ENCODE measurements at regions of chr14 and their contacts with region 1.

Region 1: GRCh38 chr14:92531106-92531873 is 17.7 kb downstream of the RIN3 start:
- DNase-seq: peak; percentile 65 to 98 (median 84)
- ATAC-seq: peak; percentile 85
- H3K4me3 ChIP-seq: peak overlapping the region in 1 of 2 experiments; percentile 15
- H3K4me3 Mint-ChIP-seq: peak overlapping the region; percentile 67
- H3K27ac ChIP-seq: peak overlapping the region; percentile 55 to 97
- H3K27ac Mint-ChIP-seq: peak overlapping the region; percentile 99
- H3K4me1 ChIP-seq: peaks cover 65% of the 10 kb centered on the region
- H3K4me1 Mint-ChIP-seq: peaks cover 75% of the 10 kb centered on the region
- H3K27me3 ChIP-seq: no peaks in the 10 kb centered on the region
- H3K27me3 Mint-ChIP-seq: no peaks in the 10 kb centered on the region
- CTCF ChIP-seq: no peak

Region 2: GRCh38 chr14:92551044-92551841 is 20.0 kb after region 1 on chr14:
- CTCF ChIA-PET with region 1: no interaction called
- POLR2A ChIA-PET with region 1: interaction called, 8 read pairs
- intact Hi-C with region 1: loop called in 1 of 2 experiments (anchors 2 kb)
- DNase-seq: peak in 2 of 9 experiments; percentile 67 to 82
- ATAC-seq: peak; percentile 57
- H3K4me3 ChIP-seq: no peak overlapping the region
- H3K4me3 Mint-ChIP-seq: no peak overlapping the region
- H3K27ac ChIP-seq: peak overlapping the region in 1 of 2 experiments; percentile 27
- H3K27ac Mint-ChIP-seq: peak overlapping the region; percentile 50
- H3K4me1 ChIP-seq: peaks cover 59% of the 10 kb centered on the region
- H3K4me1 Mint-ChIP-seq: peaks cover 74% of the 10 kb centered on the region
- H3K27me3 ChIP-seq: no peaks in the 10 kb centered on the region
- H3K27me3 Mint-ChIP-seq: no peaks in the 10 kb centered on the region
- CTCF ChIP-seq: peak; percentile 35

Region 3: DNA sequence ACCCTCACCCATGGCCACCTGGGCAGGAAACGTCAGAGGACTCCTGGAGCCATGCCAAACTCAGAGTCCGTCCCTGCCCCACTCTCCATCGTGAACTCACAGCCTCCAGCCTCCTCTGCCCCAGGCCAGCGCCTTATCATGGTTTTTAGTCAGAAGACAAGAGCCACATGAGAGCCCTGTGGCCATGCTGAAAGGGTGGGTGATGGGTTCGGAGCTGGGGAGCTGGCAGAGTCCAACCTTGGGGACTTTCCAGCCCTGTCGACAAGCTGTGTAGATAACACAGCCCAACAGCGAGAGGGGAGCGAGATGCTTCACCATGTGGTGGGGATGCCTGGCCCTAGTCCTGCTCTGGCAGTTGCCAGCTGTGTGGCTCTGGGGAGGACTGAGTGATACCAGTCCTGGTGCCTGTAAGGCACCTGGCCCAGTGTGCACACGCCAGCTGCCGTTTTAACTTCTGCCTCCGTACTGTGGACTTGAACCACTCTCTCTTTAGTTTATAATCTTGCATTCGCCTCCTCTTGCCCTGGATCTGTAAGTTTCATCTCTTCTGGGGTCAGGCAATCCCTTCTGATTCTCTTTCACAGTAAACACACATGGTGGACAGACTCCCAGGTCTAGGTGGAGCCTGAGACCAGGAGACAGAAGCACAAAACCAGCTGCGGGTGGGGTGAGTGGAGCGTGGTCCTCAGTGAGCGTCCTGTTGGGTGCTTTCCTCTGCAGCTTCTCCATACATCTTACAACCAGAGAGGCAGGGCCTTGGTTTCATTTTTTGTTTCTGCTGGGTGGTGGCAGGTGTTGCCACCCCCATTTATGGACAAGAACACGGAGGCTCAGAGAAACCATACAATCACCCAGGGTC is 37.6 kb after region 1 on chr14:
- CTCF ChIA-PET with region 1: no interaction called
- POLR2A ChIA-PET with region 1: no interaction called
- intact Hi-C with region 1: loop called in 1 of 2 experiments (anchors 5 kb)
- DNase-seq: peak in 6 of 9 experiments; percentile 46 to 90 (median 68)
- ATAC-seq: peak; percentile 80
- H3K4me3 ChIP-seq: peak overlapping the region; percentile 12 to 17
- H3K4me3 Mint-ChIP-seq: peak overlapping the region; percentile 83
- H3K27ac ChIP-seq: peak overlapping the region; percentile 17 to 91
- H3K27ac Mint-ChIP-seq: peak overlapping the region; percentile 99
- H3K4me1 ChIP-seq: peaks cover 30% of the 10 kb centered on the region
- H3K4me1 Mint-ChIP-seq: peaks cover 67% of the 10 kb centered on the region
- H3K27me3 ChIP-seq: no peaks in the 10 kb centered on the region
- H3K27me3 Mint-ChIP-seq: no peaks in the 10 kb centered on the region
- CTCF ChIP-seq: no peak

Region 4: DNA sequence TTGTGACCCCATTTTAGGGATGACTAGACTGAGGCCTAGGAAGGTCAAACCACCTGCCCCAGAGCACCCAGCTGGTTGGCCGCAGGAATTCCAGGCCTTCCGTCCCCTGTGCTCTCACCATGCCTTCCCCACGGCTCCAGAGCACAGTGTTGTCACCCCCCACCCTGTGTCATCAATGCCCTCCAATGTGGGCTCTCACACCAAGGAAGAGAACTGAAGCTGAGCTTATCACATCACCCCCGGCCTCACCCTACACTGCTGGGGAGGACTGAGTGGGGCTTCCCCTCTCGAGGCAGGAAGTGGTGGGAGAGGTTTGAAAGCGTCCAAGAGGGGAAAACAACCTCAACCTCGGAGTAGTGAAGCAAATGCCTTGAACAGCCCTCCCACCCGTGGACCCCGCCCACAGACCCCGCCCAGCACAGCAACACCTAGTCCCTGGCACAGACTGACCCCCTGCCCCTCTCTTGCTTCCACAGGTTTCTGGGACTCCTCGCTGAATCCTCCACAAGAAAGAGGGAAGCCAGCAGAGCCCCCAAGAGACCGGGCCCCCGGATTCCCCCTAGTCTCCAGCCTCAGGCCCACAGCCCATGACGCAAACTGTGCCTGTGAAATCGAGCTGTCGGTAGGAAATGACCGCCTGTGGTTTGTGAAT is 119.9 kb after region 1 on chr14:
- CTCF ChIA-PET with region 1: no interaction called
- POLR2A ChIA-PET with region 1: no interaction called
- intact Hi-C with region 1: loop called in 1 of 2 experiments (anchors 2 kb)
- DNase-seq: peak; percentile 56 to 96 (median 84)
- ATAC-seq: peak; percentile 82
- H3K4me3 ChIP-seq: peak overlapping the region; percentile 77 to 91
- H3K4me3 Mint-ChIP-seq: peak overlapping the region; percentile 98
- H3K27ac ChIP-seq: peak overlapping the region; percentile 77 to 95
- H3K27ac Mint-ChIP-seq: peak overlapping the region; percentile 100
- H3K4me1 ChIP-seq: peaks cover 61% of the 10 kb centered on the region
- H3K4me1 Mint-ChIP-seq: peaks cover 76% of the 10 kb centered on the region
- H3K27me3 ChIP-seq: no peaks in the 10 kb centered on the region
- H3K27me3 Mint-ChIP-seq: no peaks in the 10 kb centered on the region
- CTCF ChIP-seq: no peak